H1 (cell line): ENCODE measurements at regions of chr7 and their contacts with region 1.

Region 1: GRCh38 chr7:73851410-73852234 is 9.3 kb upstream of the METTL27 start:
- DNase-seq: no peak
- H3K4me3 ChIP-seq: no peak overlapping the region
- H3K27ac ChIP-seq: no peak overlapping the region
- H3K4me1 ChIP-seq: 0 out of 7 replicates have a peak, but pooled peaks cover 0 to 2% (median 0%) of the 10 kb centered on the region in 4 experiments
- H3K27me3 ChIP-seq: peaks cover 0 to 3% (median 0%) of the 10 kb centered on the region in 4 experiments; a peak in 3 of 7 replicates
- CTCF ChIP-seq: no peak
- EP300 ChIP-seq: no peak
- POLR2A ChIP-seq: no peak
- RAD21 ChIP-seq: no peak

Region 2: DNA sequence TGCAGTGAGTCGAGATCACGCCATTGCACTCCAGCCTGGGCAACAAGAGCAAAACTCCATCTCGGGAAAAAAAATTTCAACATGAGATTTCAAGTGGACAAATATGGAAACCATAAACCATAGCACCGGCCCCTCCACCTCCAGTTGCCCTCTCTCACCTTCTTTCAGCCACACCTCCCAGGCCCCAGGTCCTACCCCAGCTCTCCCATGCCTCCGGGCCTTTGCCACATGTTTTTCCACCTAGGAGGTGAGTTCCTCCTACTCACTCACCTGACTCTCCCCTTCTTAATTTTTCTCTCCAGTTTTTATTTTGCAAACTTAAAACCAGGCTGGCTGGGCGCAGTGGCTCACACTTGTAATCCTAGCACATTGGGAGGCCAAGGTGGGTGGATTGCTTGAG is 34.5 kb before region 1 on chr7:
- CTCF ChIA-PET with region 1: interaction called, 72 read pairs
- POLR2A ChIA-PET with region 1: interaction called, 6 read pairs
- DNase-seq: no peak
- H3K4me3 ChIP-seq: no peak overlapping the region
- H3K27ac ChIP-seq: no peak overlapping the region
- H3K4me1 ChIP-seq: no peaks in the 10 kb centered on the region; a peak in 2 of 7 replicates
- H3K27me3 ChIP-seq: no peaks in the 10 kb centered on the region
- CTCF ChIP-seq: no peak
- EP300 ChIP-seq: no peak
- POLR2A ChIP-seq: no peak
- RAD21 ChIP-seq: no peak

Region 3: GRCh38 chr7:73865738-73866445 is 14.3 kb after region 1 on chr7:
- CTCF ChIA-PET with region 1: interaction called, 10 read pairs
- POLR2A ChIA-PET with region 1: no interaction called
- DNase-seq: peak in 1 of 2 experiments; percentile 58
- H3K4me3 ChIP-seq: no peak overlapping the region
- H3K27ac ChIP-seq: no peak overlapping the region
- H3K4me1 ChIP-seq: peaks cover 3 to 15% (median 12%) of the 10 kb centered on the region in 4 experiments
- H3K27me3 ChIP-seq: no peaks in the 10 kb centered on the region
- CTCF ChIP-seq: peak; percentile 58 to 82 (median 68)
- EP300 ChIP-seq: no peak
- POLR2A ChIP-seq: no peak
- RAD21 ChIP-seq: peak; percentile 94 to 95